Activated B cell treated with CpG ODN at 0.5 μM for 24 hours (primary cell): ENCODE measurements at regions of chr21 and their contacts with region 1.

Region 1: GRCh38 chr21:39175154-39175553 is 8.1 kb downstream of the PSMG1 start:
- DNase-seq: no peak
- ATAC-seq: no peak
- H3K4me3 Mint-ChIP-seq: no peak overlapping the region
- H3K27ac Mint-ChIP-seq: no peak overlapping the region
- H3K4me1 Mint-ChIP-seq: no peaks in the 10 kb centered on the region
- H3K27me3 Mint-ChIP-seq: no peaks in the 10 kb centered on the region
- CTCF ChIP-seq: no peak

Region 2: DNA sequence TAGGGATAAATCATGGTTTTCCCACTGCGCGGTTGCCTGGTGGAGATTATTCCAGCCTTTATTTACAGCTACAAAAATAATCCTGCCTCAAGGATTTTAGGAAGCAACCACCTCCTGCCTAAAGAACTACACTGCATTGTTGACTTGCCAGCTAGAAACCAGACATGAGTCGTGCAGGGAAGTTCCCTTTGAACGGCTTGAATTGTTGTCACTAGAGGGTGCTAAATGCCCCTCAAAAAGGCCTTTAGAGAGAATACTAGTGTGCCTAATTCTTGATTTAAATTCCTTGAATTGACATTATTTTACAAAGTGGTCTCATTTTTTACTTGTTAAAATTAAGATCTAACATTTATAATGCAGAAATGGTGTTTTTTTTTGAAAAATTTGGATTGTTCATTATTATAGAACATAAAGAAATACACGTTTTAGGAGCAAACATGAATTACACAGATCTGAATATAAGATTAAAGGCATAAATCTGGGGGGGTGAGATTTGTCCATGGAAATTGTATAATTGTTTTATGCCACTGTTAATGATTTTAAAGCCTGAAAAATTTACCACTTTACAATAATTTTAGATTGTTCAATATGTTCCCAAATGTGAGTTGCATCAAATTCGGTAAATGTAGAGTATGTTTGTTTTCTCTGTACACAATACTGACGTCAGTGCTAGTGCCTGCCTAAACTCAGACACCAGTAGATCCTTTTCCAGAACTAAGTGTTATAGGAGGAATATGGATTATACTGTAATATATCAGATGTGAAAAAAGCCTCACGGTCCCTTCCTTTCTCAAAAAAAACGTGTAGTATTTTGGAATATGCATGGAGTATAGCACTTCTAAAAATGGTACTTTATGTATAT is 669.3 kb before region 1 on chr21:
- CTCF ChIA-PET with region 1: no interaction called
- POLR2A ChIA-PET with region 1: no interaction called
- intact Hi-C with region 1: loop called (anchors 2 kb)
- DNase-seq: no peak
- ATAC-seq: no peak
- H3K4me3 Mint-ChIP-seq: no peak overlapping the region
- H3K27ac Mint-ChIP-seq: no peak overlapping the region
- H3K4me1 Mint-ChIP-seq: no peaks in the 10 kb centered on the region
- H3K27me3 Mint-ChIP-seq: peaks cover 14% of the 10 kb centered on the region
- CTCF ChIP-seq: no peak

Region 3: DNA sequence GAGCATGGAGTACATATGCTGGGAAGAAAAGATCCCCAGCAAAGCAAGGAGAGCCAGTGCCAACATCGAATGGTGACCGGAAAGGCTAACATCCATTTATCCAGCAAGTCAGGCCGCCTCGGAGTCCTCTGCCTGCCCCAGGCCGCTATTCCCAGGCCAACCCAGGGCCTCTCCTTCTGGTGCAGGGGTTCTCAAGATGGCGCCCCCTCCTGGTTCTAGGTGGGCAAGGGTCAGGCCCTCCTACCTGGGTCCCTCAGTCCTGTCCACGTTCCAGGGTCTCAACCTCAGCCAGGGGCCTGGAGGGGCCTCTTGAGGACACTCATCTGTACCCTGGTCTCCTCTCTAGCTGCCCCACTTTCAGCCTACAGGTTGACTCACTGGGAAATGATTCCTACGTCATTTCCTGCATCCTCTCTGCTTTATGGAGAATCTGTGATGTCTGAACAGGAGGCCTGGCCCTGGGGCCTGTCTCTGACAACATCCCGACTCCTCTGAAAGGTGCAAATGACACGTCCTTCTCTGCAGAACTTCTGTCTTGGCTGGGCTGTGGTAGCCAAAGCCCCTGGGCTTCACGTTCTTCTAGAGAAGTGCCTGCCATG is 137.2 kb before region 1 on chr21:
- CTCF ChIA-PET with region 1: no interaction called
- POLR2A ChIA-PET with region 1: no interaction called
- intact Hi-C with region 1: no loop called
- DNase-seq: no peak
- ATAC-seq: no peak
- H3K4me3 Mint-ChIP-seq: no peak overlapping the region
- H3K27ac Mint-ChIP-seq: no peak overlapping the region
- H3K4me1 Mint-ChIP-seq: peaks cover 2% of the 10 kb centered on the region
- H3K27me3 Mint-ChIP-seq: peaks cover 7% of the 10 kb centered on the region
- CTCF ChIP-seq: no peak

Region 4: GRCh38 chr21:39197448-39198233 is 22.5 kb after region 1 on chr21:
- CTCF ChIA-PET with region 1: no interaction called
- POLR2A ChIA-PET with region 1: no interaction called
- intact Hi-C with region 1: no loop called
- DNase-seq: no peak
- ATAC-seq: no peak
- H3K4me3 Mint-ChIP-seq: no peak overlapping the region
- H3K27ac Mint-ChIP-seq: no peak overlapping the region
- H3K4me1 Mint-ChIP-seq: no peaks in the 10 kb centered on the region
- H3K27me3 Mint-ChIP-seq: no peaks in the 10 kb centered on the region
- CTCF ChIP-seq: no peak